Activated B cell treated with CpG ODN at 0.5 μM for 24 hours (primary cell): ENCODE measurements at regions of chr6 and their contacts with region 1.

Region 1: DNA sequence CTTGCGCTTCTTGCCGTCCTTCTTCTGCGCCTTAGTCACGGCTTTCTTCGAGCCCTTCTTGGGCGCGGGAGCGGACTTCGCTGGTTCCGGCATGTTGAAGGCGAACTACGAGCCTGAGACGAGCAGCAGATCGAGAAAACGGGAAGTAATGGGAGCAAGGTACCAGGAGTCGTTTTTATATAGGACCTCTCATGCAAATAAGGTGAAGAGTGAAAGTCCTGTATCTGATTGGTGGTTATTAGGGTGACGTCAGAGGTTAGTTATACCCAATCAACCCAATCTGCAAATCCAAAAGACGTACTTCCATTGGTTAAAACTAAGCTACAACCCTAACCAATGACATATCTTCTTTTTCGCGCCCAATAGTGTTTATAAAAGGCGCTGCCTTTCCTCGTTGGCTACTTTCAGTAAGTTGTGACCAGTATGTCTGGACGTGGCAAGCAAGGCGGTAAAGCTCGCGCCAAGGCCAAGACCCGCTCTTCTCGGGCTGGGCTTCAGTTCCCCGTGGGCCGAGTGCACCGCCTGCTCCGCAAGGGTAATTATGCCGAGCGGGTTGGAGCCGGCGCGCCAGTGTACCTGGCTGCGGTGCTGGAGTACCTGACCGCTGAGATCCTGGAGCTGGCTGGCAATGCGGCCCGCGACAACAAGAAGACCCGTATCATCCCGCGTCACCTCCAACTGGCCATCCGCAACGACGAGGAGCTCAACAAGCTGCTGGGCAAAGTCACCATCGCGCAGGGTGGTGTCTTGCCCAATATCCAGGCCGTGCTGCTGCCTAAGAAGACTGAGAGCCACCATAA is 100.6 kb upstream of the PRSS16 start:
- DNase-seq: peak; percentile 70
- ATAC-seq: peak; percentile 80
- H3K4me3 Mint-ChIP-seq: no peak overlapping the region
- H3K27ac Mint-ChIP-seq: no peak overlapping the region
- H3K4me1 Mint-ChIP-seq: peaks cover 26% of the 10 kb centered on the region
- H3K27me3 Mint-ChIP-seq: no peaks in the 10 kb centered on the region
- CTCF ChIP-seq: no peak

Region 2: GRCh38 chr6:26031595-26032339 is 1115.1 kb before region 1 on chr6:
- CTCF ChIA-PET with region 1: no interaction called
- POLR2A ChIA-PET with region 1: interaction called, 29 read pairs
- intact Hi-C with region 1: no loop called
- DNase-seq: peak; percentile 55
- ATAC-seq: peak; percentile 62
- H3K4me3 Mint-ChIP-seq: peak overlapping the region; percentile 93
- H3K27ac Mint-ChIP-seq: peak overlapping the region; percentile 98
- H3K4me1 Mint-ChIP-seq: peaks cover 40% of the 10 kb centered on the region
- H3K27me3 Mint-ChIP-seq: peaks cover 2% of the 10 kb centered on the region
- CTCF ChIP-seq: no peak

Region 3: DNA sequence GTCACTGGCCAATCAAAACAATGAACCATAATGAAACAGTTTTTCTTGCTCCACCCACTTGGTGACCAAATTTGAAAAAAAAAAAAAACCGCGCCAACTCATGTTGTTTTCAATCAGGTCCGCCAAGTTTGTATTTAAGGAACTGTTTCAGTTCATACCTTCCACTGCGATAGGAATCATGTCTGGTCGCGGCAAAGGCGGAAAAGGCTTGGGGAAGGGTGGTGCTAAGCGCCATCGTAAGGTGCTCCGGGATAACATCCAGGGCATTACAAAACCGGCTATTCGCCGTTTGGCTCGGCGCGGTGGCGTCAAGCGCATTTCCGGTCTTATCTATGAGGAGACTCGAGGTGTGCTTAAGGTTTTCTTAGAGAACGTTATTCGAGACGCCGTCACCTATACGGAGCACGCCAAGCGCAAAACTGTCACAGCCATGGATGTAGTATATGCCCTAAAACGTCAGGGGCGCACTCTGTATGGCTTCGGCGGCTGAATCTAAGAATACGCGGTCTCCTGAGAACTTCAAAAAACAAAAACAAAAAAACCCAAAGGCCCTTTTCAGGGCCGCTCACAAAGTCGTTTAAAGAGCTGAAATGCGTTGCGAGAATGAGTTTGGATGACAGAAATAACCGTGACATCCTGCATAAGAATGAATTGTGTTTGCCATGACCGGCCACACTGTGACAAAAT is 1043.0 kb before region 1 on chr6:
- CTCF ChIA-PET with region 1: no interaction called
- POLR2A ChIA-PET with region 1: interaction called, 6 read pairs
- intact Hi-C with region 1: loop called (anchors 5 kb)
- DNase-seq: peak; percentile 83
- ATAC-seq: peak; percentile 85
- H3K4me3 Mint-ChIP-seq: peak overlapping the region; percentile 85
- H3K27ac Mint-ChIP-seq: peak overlapping the region; percentile 98
- H3K4me1 Mint-ChIP-seq: peaks cover 12% of the 10 kb centered on the region
- H3K27me3 Mint-ChIP-seq: peaks cover 3% of the 10 kb centered on the region
- CTCF ChIP-seq: no peak

Region 4: GRCh38 chr6:26234421-26235296 is 912.2 kb before region 1 on chr6:
- CTCF ChIA-PET with region 1: no interaction called
- POLR2A ChIA-PET with region 1: interaction called, 24 read pairs
- intact Hi-C with region 1: no loop called
- DNase-seq: peak; percentile 49
- ATAC-seq: peak; percentile 77
- H3K4me3 Mint-ChIP-seq: peak overlapping the region; percentile 89
- H3K27ac Mint-ChIP-seq: peak overlapping the region; percentile 97
- H3K4me1 Mint-ChIP-seq: peaks cover 26% of the 10 kb centered on the region
- H3K27me3 Mint-ChIP-seq: no peaks in the 10 kb centered on the region
- CTCF ChIP-seq: no peak

Region 5: GRCh38 chr6:26596579-26597388 is 550.1 kb before region 1 on chr6 and contains the start of gene ABT1:
- CTCF ChIA-PET with region 1: no interaction called
- POLR2A ChIA-PET with region 1: interaction called, 5 read pairs
- intact Hi-C with region 1: loop called (anchors 1 kb)
- DNase-seq: peak; percentile 91
- ATAC-seq: peak; percentile 90
- H3K4me3 Mint-ChIP-seq: no peak within 1 kb of the TSS
- H3K27ac Mint-ChIP-seq: no peak within 1 kb of the TSS
- H3K4me1 Mint-ChIP-seq: peaks cover 17% of the 10 kb centered on the region
- H3K27me3 Mint-ChIP-seq: peaks cover 5% of the 10 kb centered on the region
- CTCF ChIP-seq: no peak
- total RNA-seq, gene ABT1: 30.7 and 30.8 TPM in 2 replicates

Region 6: DNA sequence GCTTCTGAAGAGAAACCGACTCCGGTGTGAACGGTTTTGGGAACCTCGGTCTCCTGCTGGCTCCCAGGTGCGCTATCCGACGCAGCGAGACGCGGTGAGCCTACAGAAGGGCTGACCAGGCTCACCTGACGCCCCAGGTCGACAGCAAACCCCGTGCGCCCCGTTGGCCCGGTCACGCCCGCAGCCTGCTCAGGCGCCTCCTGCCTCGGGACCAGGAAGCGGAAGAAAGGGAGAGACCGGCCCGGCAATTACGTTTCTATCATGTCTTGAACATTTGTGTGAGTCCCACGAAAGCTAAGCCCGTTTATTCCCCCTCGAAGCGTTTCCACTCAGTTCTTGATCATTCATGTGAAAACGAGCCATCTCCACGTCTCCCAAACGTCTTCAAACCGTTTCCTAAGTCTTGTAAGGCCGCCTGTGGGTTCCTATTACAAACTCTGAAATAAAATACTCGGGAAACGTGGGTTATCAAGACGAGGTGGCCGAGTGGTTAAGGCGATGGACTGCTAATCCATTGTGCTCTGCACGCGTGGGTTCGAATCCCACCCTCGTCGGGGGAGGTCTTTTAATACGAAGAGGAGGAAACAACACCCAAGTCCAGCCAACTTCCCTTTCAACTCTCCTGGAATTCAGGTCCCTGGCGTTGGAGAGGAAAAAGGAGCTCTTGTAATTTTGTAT is 49.9 kb before region 1 on chr6:
- CTCF ChIA-PET with region 1: no interaction called
- POLR2A ChIA-PET with region 1: no interaction called
- intact Hi-C with region 1: no loop called
- DNase-seq: no peak
- ATAC-seq: no peak
- H3K4me3 Mint-ChIP-seq: peak overlapping the region; percentile 79
- H3K27ac Mint-ChIP-seq: no peak overlapping the region
- H3K4me1 Mint-ChIP-seq: peaks cover 13% of the 10 kb centered on the region
- H3K27me3 Mint-ChIP-seq: peaks cover 49% of the 10 kb centered on the region
- CTCF ChIP-seq: no peak

Region 7: DNA sequence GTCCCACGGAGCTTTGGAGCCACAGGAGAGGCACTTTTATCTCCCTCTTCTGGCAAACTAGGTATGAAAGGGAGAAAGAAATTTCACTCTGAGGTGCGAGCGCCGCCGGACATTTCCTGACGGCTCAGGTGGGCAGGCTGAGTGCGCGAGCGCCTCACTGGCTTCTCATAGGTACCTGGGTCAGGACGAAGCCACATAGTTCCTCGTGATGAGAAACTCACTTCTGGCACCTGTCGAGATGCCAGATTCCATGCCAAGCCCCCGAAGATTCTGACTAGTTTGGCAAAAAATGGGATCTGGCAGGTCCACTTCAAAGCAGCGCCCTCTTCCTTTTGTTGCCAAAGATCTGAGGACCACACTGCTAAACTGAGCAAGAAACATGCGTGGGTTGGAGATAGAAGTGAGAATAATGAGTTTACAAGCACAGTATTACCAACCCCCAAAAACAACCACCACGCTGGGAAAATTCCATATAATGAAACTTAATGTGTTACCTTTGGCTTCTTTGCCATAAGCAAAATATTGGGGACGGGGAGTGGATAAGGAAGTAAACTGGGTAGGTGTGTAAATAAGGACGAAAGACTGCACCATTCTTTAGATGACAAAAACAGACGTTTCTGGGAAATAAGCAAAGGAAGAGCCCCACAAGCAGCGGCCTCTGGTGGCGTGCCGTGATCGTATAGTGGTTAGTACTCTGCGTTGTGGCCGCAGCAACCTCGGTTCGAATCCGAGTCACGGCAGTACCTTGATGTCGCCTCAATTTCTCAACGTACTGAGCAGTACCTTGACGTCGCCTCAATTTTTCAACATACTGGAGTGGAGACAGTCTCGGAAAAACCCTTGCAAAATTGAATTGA is 10.8 kb after region 1 on chr6:
- CTCF ChIA-PET with region 1: interaction called, 6 read pairs
- POLR2A ChIA-PET with region 1: interaction called, 54 read pairs
- intact Hi-C with region 1: loop called (anchors 1 kb)
- DNase-seq: peak; percentile 60
- ATAC-seq: peak; percentile 80
- H3K4me3 Mint-ChIP-seq: peak overlapping the region; percentile 89
- H3K27ac Mint-ChIP-seq: peak overlapping the region; percentile 81
- H3K4me1 Mint-ChIP-seq: peaks cover 33% of the 10 kb centered on the region
- H3K27me3 Mint-ChIP-seq: no peaks in the 10 kb centered on the region
- CTCF ChIP-seq: no peak

Region 8: DNA sequence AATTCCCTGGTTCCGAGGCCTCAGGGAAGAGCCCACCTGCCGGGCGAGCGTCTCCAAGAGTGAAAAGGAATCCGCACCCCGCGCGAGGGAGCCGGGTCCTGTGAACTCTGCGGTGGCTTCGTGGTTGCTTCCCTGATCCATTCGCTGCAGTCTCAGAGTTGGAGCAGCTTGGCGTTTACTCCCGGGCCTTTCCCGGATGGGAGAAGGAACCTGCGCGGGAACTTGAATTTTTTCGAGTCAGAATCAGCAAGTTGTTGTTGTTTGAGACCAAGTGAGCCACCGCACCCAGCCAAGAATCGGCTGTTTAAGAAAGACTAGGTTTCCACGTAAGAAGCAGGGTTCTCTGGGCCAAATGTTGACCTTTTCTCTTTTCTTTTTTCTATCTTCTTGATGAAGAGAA is 113.5 kb after region 1 on chr6:
- CTCF ChIA-PET with region 1: no interaction called
- POLR2A ChIA-PET with region 1: no interaction called
- intact Hi-C with region 1: no loop called
- DNase-seq: no peak
- ATAC-seq: no peak
- H3K4me3 Mint-ChIP-seq: no peak overlapping the region
- H3K27ac Mint-ChIP-seq: no peak overlapping the region
- H3K4me1 Mint-ChIP-seq: no peaks in the 10 kb centered on the region
- H3K27me3 Mint-ChIP-seq: peaks cover 45% of the 10 kb centered on the region
- CTCF ChIP-seq: no peak

Region 9: GRCh38 chr6:27280064-27280539 is 133.2 kb after region 1 on chr6:
- CTCF ChIA-PET with region 1: no interaction called
- POLR2A ChIA-PET with region 1: no interaction called
- intact Hi-C with region 1: no loop called
- DNase-seq: no peak
- ATAC-seq: no peak
- H3K4me3 Mint-ChIP-seq: no peak overlapping the region
- H3K27ac Mint-ChIP-seq: no peak overlapping the region
- H3K4me1 Mint-ChIP-seq: peaks cover 5% of the 10 kb centered on the region
- H3K27me3 Mint-ChIP-seq: peaks cover 56% of the 10 kb centered on the region
- CTCF ChIP-seq: no peak

Region 10: DNA sequence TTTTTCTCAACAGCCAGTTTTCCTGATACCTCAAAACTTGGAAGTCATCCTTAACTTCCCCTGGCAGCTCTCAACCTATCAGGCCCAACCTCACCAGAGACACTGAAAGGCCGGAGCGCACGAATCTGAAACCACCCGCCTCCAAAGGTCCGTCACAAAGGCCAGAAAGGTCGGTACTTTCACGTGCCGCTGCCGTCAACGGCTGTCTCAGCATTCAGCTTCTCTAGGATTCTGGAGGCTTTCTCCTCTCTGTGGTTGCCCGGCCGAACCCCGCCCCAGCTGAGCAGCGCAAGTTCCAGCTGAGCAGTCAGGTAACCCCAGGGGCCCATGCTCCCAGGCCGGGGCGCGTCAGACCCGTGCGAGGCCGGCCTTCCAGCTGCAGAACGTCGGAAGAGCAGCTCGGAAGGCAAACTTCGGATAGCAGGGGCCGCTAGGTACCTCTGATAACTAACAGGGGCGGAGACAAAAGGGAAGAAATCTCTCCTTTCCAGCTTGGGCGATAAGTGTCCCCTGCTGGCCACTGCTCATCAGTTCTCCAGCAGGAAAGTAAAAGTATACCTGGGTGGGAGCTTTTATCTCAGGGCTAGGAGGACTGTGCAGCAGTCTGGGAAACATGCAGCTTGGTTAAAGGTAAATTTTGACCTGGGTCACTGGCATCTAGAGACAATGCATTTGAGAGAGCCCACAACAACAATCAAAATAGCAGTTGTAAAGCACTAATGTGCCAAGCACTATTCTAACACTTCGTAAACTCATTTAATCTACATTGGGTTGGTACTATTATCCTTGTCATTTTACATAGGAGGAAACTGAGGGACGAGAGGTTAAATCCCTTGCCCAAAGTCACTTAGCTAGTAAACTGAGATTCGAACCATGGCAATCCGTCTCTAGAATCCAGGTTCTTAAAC is 1236.6 kb after region 1 on chr6:
- CTCF ChIA-PET with region 1: no interaction called
- POLR2A ChIA-PET with region 1: interaction called, 10 read pairs
- intact Hi-C with region 1: no loop called
- DNase-seq: peak; percentile 77
- ATAC-seq: peak; percentile 98
- H3K4me3 Mint-ChIP-seq: peak overlapping the region; percentile 88
- H3K27ac Mint-ChIP-seq: peak overlapping the region; percentile 94
- H3K4me1 Mint-ChIP-seq: peaks cover 18% of the 10 kb centered on the region
- H3K27me3 Mint-ChIP-seq: no peaks in the 10 kb centered on the region
- CTCF ChIP-seq: no peak